ENCODE measurements at regions of chr16 and their contacts with region 1.

Region 1: GRCh38 chr16:82263521-82264143 is 93.6 kb upstream of the MPHOSPH6 start:
- DNase-seq: peak; percentile 49
- CTCF ChIP-seq: peak; percentile 95

Region 2: DNA sequence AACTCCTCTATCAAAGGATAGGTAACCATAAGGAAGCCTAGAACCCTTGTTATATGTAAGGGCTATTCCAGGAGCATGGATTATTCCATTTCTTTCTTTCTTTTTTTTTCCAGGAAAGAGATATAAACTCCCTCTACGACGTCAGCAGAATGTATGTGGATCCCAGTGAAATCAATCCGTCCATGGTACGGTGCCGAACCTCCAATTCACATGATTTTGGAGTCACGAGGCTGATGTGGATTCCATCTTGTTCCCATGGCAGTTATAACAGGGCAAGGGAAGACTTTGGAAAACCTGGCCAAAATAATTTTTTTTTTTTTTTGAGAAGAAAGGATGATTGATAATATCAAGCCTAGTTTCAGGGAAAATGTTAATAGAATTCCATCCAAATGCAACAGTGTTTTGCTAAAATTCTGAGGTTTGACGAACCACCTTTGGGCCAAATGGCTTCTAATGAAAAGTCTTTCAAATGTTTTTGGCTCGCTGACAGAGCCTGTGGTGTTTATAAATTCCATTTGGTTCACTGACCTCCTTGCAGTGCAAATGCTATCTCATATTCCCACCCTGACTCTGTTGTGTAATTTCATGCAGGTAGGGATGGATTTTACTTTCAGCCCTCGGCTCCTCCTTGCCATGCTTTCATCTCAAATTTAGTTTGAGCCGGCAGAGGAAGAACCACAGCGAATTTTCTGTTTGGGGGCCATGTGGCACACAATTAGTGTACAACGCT is 342.4 kb before region 1 on chr16:
- CTCF ChIA-PET with region 1: no interaction called
- POLR2A ChIA-PET with region 1: no interaction called
- DNase-seq: no peak
- CTCF ChIP-seq: no peak

Region 3: GRCh38 chr16:82146957-82147356 is 116.7 kb before region 1 on chr16:
- CTCF ChIA-PET with region 1: no interaction called
- POLR2A ChIA-PET with region 1: no interaction called
- DNase-seq: no peak
- CTCF ChIP-seq: no peak

Region 4: DNA sequence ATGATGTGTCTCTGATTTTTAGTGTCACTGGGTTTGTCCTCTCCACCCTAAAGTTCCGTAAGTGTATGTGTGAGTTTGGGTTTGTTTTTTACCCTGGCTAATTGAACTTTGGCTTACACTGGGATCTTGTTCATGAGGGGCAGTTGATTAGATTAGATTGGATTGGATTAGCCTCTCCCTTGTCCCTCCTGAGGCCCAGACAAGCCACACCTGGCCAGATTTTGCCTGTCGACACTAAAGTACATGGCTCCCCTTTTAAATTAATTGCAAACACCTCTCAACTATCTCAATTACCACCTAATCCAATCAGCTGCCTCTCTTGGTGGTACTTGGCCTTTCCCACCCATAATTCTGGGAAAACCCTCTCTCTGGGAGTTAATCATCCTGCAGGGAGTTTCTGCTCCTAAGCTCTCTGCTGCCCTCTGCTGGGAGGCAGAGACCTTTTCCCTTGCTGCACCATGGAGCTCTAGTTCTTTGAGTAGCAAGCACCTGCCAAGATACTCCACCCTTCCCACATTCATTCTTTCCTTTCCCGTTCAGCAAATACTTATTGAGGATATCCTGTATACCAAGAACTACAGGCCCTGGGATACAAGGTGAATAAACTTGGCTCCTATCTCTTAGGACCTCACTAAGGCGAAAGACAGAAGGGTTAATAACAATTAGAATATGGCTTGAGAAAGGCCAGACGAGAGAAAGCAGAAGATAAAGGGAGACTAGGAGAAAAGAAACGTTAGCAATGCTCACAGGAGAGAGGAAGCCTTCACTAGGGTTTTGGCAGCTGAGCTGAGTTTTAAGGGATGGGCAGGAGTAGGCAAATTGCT is 33.6 kb before region 1 on chr16:
- CTCF ChIA-PET with region 1: interaction called, 24 read pairs
- POLR2A ChIA-PET with region 1: no interaction called
- DNase-seq: peak; percentile 43
- CTCF ChIP-seq: peak; percentile 87

Region 5: GRCh38 chr16:82280867-82281266 is 17.2 kb after region 1 on chr16:
- CTCF ChIA-PET with region 1: interaction called, 19 read pairs
- POLR2A ChIA-PET with region 1: no interaction called
- DNase-seq: no peak
- CTCF ChIP-seq: no peak

Region 6: DNA sequence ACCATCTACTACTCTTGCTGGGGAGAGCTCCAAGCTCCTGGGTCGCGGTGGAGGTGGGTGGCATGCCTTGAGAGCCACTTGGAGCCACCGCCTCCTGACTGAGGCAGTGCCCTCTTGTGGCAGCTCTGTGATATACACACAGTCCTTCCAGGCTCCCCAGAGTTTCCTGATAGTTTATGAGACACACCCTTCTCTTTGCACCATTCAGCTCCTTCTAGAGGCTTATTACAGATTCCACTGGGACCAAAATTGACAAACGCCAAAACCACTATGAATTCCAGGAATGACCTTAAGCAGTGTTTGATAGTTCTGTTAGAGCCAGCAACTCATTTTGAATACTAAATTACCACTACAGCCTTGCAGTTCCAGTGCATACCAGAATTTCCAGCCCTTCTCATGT is 193.1 kb after region 1 on chr16:
- CTCF ChIA-PET with region 1: interaction called, 41 read pairs
- POLR2A ChIA-PET with region 1: no interaction called
- DNase-seq: peak; percentile 66
- CTCF ChIP-seq: peak; percentile 80

Region 7: GRCh38 chr16:83215406-83216001 is 951.9 kb after region 1 on chr16:
- CTCF ChIA-PET with region 1: interaction called, 40 read pairs
- POLR2A ChIA-PET with region 1: no interaction called
- DNase-seq: peak; percentile 40
- CTCF ChIP-seq: peak; percentile 76

Measured in GM10248 (cell line).